Activated T-helper 1 cell treated with anti-CD3 and anti-CD28 coated beads, Interleukin-12 subunit alpha, Interleukin-12 subunit beta, Interleukin-2, Interleukin-4 antibody, amounts not matched to agents 30 ng/mL and 10 ng/mL and 1 ng/mL, durations not matched to agents 14 hours and 24 hours and 36 hours (primary cell): ENCODE measurements at regions of chr5 and their contacts with region 1.

Region 1: DNA sequence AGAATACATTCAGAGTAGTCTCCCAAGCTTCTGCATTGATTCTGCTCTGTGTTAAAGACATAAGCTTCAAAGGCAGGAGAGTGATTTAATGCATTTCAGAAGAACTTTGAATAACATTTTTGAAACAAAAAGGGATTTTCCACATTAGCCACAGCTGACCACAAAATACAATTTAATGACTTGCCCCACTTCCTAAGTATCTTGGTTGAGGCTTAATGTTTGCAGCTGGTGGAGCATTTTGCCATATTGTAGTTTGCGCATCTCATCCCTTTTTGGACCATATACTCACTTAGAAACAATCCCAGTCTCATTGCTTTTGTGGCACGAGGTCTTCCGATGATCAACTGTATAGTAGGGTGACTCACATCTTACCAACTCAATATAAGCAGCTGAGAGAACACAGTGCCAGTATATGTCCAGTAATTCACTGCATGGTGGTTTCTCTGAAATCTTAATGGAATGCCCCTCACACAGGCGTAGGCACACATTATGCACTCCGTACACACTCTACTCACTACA is 455.8 kb upstream of the PTGER4 start:
- DNase-seq: peak; percentile 39
- H3K4me3 Mint-ChIP-seq: peak overlapping the region; percentile 66
- H3K27ac Mint-ChIP-seq: peak overlapping the region; percentile 91
- H3K4me1 Mint-ChIP-seq: peaks cover 70% of the 10 kb centered on the region
- H3K27me3 Mint-ChIP-seq: no peaks in the 10 kb centered on the region

Region 2: GRCh38 chr5:39948867-39949468 is 275.0 kb before region 1 on chr5:
- intact Hi-C with region 1: loop called (anchors 2 kb)
- DNase-seq: peak; percentile 46
- H3K4me3 Mint-ChIP-seq: no peak overlapping the region
- H3K27ac Mint-ChIP-seq: peak overlapping the region; percentile 7
- H3K4me1 Mint-ChIP-seq: peaks cover 6% of the 10 kb centered on the region
- H3K27me3 Mint-ChIP-seq: peaks cover 5% of the 10 kb centered on the region

Region 3: DNA sequence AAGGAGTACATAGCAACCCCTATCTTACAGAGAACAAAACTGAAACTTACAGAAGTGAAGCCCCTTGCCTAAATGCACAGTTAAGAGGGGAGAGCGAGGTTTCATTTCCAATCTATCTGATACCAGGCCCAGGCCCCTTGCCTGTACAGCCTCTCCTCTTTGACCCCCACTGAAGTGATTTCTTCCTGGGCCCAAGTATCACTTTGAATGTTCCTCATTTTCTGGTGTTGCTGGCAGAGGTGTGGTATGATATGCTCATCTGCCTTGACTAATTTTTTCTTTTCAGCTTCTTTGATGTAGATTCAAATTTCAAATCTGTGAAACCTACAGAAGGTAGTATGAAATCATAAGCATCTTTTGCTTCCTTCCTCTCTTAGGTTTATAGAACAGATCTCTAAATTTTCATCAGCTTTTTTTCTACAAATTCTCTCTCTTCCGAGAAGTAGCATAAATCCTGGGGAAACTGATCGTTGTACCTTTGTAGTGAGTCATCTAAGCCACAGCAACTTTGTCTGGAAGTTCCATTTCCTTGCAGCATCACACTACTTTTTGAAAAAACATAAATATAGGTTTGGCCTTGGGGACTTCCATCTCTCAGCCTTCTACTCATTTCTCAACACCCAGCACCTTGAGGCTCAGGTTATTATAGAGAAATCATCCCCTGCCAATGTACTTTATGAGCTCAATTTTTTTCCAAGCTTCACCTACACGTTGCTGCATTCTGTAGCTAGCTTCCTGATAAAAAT is 53.4 kb after region 1 on chr5:
- intact Hi-C with region 1: loop called (anchors 1 kb)
- DNase-seq: peak; percentile 31
- H3K4me3 Mint-ChIP-seq: peak overlapping the region; percentile 17
- H3K27ac Mint-ChIP-seq: peak overlapping the region; percentile 93
- H3K4me1 Mint-ChIP-seq: peaks cover 70% of the 10 kb centered on the region
- H3K27me3 Mint-ChIP-seq: no peaks in the 10 kb centered on the region

Region 4: GRCh38 chr5:40404613-40405012 is 180.7 kb after region 1 on chr5:
- intact Hi-C with region 1: loop called (anchors 1 kb)
- DNase-seq: peak; percentile 12
- H3K4me3 Mint-ChIP-seq: peak overlapping the region; percentile 59
- H3K27ac Mint-ChIP-seq: peak overlapping the region; percentile 99
- H3K4me1 Mint-ChIP-seq: peaks cover 86% of the 10 kb centered on the region
- H3K27me3 Mint-ChIP-seq: no peaks in the 10 kb centered on the region

Region 5: GRCh38 chr5:40578501-40579451 is 354.8 kb after region 1 on chr5:
- intact Hi-C with region 1: loop called (anchors 1 kb)
- DNase-seq: peak; percentile 40
- H3K4me3 Mint-ChIP-seq: peak overlapping the region; percentile 68
- H3K27ac Mint-ChIP-seq: peak overlapping the region; percentile 92
- H3K4me1 Mint-ChIP-seq: peaks cover 42% of the 10 kb centered on the region
- H3K27me3 Mint-ChIP-seq: no peaks in the 10 kb centered on the region

Region 6: GRCh38 chr5:40755407-40756365 is 531.7 kb after region 1 on chr5 and contains the start of gene TTC33:
- intact Hi-C with region 1: loop called (anchors 5 kb)
- DNase-seq: peak; percentile 92
- H3K4me3 Mint-ChIP-seq: no peak within 1 kb of the TSS
- H3K27ac Mint-ChIP-seq: peak within 1 kb of the TSS; percentile 41
- H3K4me1 Mint-ChIP-seq: peaks cover 21% of the 10 kb centered on the region
- H3K27me3 Mint-ChIP-seq: no peaks in the 10 kb centered on the region
- total RNA-seq, gene TTC33: 23.4 and 24.6 TPM in 2 replicates